ENCODE measurements at regions of chr2 and their contacts with region 1.

Region 1: GRCh38 chr2:215619022-215619958 is 183.4 kb upstream of the FN1 start:
- DNase-seq: peak in 1 of 2 donors; percentile 56
- H3K4me3 ChIP-seq: no peak overlapping the region
- H3K27ac ChIP-seq: no peak overlapping the region
- H3K4me1 ChIP-seq: peaks cover 0 to 21% (median 8%) of the 10 kb centered on the region in 4 donors
- H3K27me3 ChIP-seq: no peaks in the 10 kb centered on the region
- CTCF ChIP-seq: no peak
- EP300 ChIP-seq: no peak
- POLR2A ChIP-seq: no peak

Region 2: GRCh38 chr2:215442404-215442794 is 176.9 kb before region 1 on chr2:
- intact Hi-C with region 1: loop called (anchors 10 kb)
- DNase-seq: no peak
- H3K4me3 ChIP-seq: no peak overlapping the region
- H3K27ac ChIP-seq: no peak overlapping the region
- H3K4me1 ChIP-seq: peaks cover 0 to under 1% (median 0%) of the 10 kb centered on the region in 4 donors
- H3K27me3 ChIP-seq: peaks cover 0 to 4% (median 0%) of the 10 kb centered on the region in 3 donors
- CTCF ChIP-seq: no peak
- EP300 ChIP-seq: no peak
- POLR2A ChIP-seq: no peak